B cell (primary cell): ENCODE measurements at regions of chr22 and their contacts with region 1.

Region 1: GRCh38 chr22:28882878-28883656 is at the start of gene ZNRF3:
- DNase-seq: peak; percentile 92
- ATAC-seq: peak; percentile 93
- H3K4me3 ChIP-seq: peak within 1 kb of the TSS in 4 of 5 experiments; percentile 65 to 85 (median 69)
- H3K4me3 Mint-ChIP-seq: peak within 1 kb of the TSS; percentile 88
- H3K27ac ChIP-seq: no peak within 1 kb of the TSS
- H3K27ac Mint-ChIP-seq: peak within 1 kb of the TSS; percentile 56
- H3K4me1 ChIP-seq: peaks cover 11 to 15% of the 10 kb centered on the region in 2 donors
- H3K4me1 Mint-ChIP-seq: peaks cover 24% of the 10 kb centered on the region
- H3K27me3 ChIP-seq: peaks cover 0 to 25% (median 23%) of the 10 kb centered on the region in 4 experiments
- H3K27me3 Mint-ChIP-seq: peaks cover 22% of the 10 kb centered on the region
- CTCF ChIP-seq: no peak
- total RNA-seq, gene ZNRF3: 0.70 and 0.71 TPM in 2 replicates

Region 2: GRCh38 chr22:28800308-28801077 is 82.6 kb before region 1 on chr22 and contains the start of gene XBP1:
- CTCF ChIA-PET with region 1: no interaction called
- POLR2A ChIA-PET with region 1: no interaction called
- intact Hi-C with region 1: loop called (anchors 5 kb)
- DNase-seq: peak; percentile 94
- ATAC-seq: peak; percentile 97
- H3K4me3 ChIP-seq: peak within 1 kb of the TSS; percentile 71 to 98 (median 91)
- H3K4me3 Mint-ChIP-seq: peak within 1 kb of the TSS; percentile 98
- H3K27ac ChIP-seq: peak within 1 kb of the TSS; percentile 63 to 96
- H3K27ac Mint-ChIP-seq: peak within 1 kb of the TSS; percentile 96
- H3K4me1 ChIP-seq: peaks cover 27 to 40% of the 10 kb centered on the region in 2 donors
- H3K4me1 Mint-ChIP-seq: peaks cover 51% of the 10 kb centered on the region
- H3K27me3 ChIP-seq: no peaks in the 10 kb centered on the region
- H3K27me3 Mint-ChIP-seq: no peaks in the 10 kb centered on the region
- CTCF ChIP-seq: no peak
- total RNA-seq, gene XBP1: 16.8 and 18.2 TPM in 2 replicates

Region 3: GRCh38 chr22:29267858-29268417 is 384.9 kb after region 1 on chr22 and contains the starts of genes EWSR1 and RHBDD3:
- CTCF ChIA-PET with region 1: no interaction called
- POLR2A ChIA-PET with region 1: no interaction called
- intact Hi-C with region 1: loop called (anchors 1 kb)
- DNase-seq: peak; percentile 99
- ATAC-seq: peak; percentile 86
- H3K4me3 ChIP-seq: peak within 1 kb of the TSS; percentile 61 to 96 (median 80)
- H3K4me3 Mint-ChIP-seq: peak within 1 kb of the TSS; percentile 93
- H3K27ac ChIP-seq: peak within 1 kb of the TSS; percentile 98 to 99
- H3K27ac Mint-ChIP-seq: peak within 1 kb of the TSS; percentile 96
- H3K4me1 ChIP-seq: peaks cover 42 to 47% of the 10 kb centered on the region in 2 donors
- H3K4me1 Mint-ChIP-seq: peaks cover 50% of the 10 kb centered on the region
- H3K27me3 ChIP-seq: no peaks in the 10 kb centered on the region
- H3K27me3 Mint-ChIP-seq: no peaks in the 10 kb centered on the region
- CTCF ChIP-seq: no peak
- total RNA-seq, gene EWSR1: 289 and 295 TPM in 2 replicates
- total RNA-seq, gene RHBDD3: 11.4 and 11.9 TPM in 2 replicates

Region 4: GRCh38 chr22:29766632-29767170 is 883.6 kb after region 1 on chr22 and contains the start of gene ZMAT5:
- CTCF ChIA-PET with region 1: no interaction called
- POLR2A ChIA-PET with region 1: no interaction called
- intact Hi-C with region 1: loop called (anchors 10 kb)
- DNase-seq: peak; percentile 95
- ATAC-seq: peak; percentile 97
- H3K4me3 ChIP-seq: peak within 1 kb of the TSS; percentile 73 to 99 (median 87)
- H3K4me3 Mint-ChIP-seq: peak within 1 kb of the TSS; percentile 99
- H3K27ac ChIP-seq: peak within 1 kb of the TSS; percentile 46 to 80
- H3K27ac Mint-ChIP-seq: peak within 1 kb of the TSS; percentile 95
- H3K4me1 ChIP-seq: peaks cover 17 to 20% of the 10 kb centered on the region in 2 donors
- H3K4me1 Mint-ChIP-seq: peaks cover 36% of the 10 kb centered on the region
- H3K27me3 ChIP-seq: no peaks in the 10 kb centered on the region
- H3K27me3 Mint-ChIP-seq: no peaks in the 10 kb centered on the region
- CTCF ChIP-seq: no peak
- total RNA-seq, gene ZMAT5: 16.5 and 17.8 TPM in 2 replicates